Dorsolateral prefrontal cortex (tissue), 120 donors: ENCODE measurements at regions of chr10 and their contacts with region 1.

Region 1: DNA sequence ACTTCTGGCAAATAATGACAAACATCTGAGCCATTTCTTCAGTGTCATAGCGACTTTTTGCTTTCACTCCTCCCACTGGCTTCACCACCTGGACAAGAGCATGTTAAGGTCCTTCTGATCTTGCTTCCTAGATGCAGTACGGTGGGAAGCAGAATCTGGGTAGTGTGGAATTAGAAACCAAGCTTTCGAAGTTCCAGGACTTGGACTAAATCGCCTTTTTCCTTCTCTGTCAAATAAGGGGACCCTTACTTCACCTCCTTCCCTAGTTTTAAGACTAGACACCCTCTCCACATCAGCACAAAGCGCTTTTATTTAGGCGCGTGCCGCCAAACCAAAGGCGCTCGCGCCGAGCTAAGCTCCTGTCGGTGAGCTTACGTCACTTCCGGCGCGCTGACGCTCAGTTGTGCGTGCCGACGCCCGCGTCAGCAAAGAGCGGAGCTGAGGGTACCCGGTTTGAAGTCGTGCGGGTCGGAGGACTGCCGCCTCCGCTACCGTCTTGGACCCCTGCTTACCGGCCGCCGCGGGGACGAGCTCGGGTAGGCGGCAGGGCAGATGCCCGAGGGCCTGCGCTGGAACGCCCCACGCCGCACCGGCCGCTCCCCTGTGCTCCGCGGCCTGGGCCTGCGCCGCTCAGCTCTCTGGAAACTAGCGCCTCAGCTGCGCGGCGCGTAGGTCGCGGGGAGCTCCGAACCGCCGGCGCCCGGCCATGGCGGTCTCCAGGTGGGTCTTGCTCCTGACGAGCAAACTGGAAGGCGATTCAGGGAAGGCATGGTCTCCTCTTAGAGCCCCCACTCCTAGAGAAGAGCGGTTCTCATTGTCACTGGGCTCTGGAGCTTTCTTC is at the start of gene BTAF1:
- DNase-seq: peak; percentile 89 to 97 (median 94)
- H3K4me3 ChIP-seq: peak within 1 kb of the TSS; percentile 39 to 100 (median 91)
- H3K27ac ChIP-seq: peak within 1 kb of the TSS; percentile 56 to 99 (median 93)
- H3K27me3 ChIP-seq: no peaks in the 10 kb centered on the region
- CTCF ChIP-seq: peak in 33 of 56 donors; percentile 13 to 55 (median 31)
- total RNA-seq, gene BTAF1: 28.2 to 65.3 (median 40.9) TPM

Region 2: GRCh38 chr10:91797874-91798648 is 125.5 kb before region 1 on chr10 and contains the start of gene TNKS2:
- intact Hi-C with region 1: loop called (anchors 5 kb)
- DNase-seq: peak; percentile 77 to 94 (median 87)
- H3K4me3 ChIP-seq: peak within 1 kb of the TSS; percentile 50 to 99 (median 92)
- H3K27ac ChIP-seq: peak within 1 kb of the TSS; percentile 52 to 99 (median 91)
- H3K27me3 ChIP-seq: no peaks in the 10 kb centered on the region
- CTCF ChIP-seq: peak in 38 of 56 donors; percentile 9 to 66 (median 30)
- total RNA-seq, gene TNKS2: 35.0 to 51.5 (median 43.0) TPM